Mammary epithelial cell (primary cell): ENCODE measurements at regions of chr17 and their contacts with region 1.

Region 1: DNA sequence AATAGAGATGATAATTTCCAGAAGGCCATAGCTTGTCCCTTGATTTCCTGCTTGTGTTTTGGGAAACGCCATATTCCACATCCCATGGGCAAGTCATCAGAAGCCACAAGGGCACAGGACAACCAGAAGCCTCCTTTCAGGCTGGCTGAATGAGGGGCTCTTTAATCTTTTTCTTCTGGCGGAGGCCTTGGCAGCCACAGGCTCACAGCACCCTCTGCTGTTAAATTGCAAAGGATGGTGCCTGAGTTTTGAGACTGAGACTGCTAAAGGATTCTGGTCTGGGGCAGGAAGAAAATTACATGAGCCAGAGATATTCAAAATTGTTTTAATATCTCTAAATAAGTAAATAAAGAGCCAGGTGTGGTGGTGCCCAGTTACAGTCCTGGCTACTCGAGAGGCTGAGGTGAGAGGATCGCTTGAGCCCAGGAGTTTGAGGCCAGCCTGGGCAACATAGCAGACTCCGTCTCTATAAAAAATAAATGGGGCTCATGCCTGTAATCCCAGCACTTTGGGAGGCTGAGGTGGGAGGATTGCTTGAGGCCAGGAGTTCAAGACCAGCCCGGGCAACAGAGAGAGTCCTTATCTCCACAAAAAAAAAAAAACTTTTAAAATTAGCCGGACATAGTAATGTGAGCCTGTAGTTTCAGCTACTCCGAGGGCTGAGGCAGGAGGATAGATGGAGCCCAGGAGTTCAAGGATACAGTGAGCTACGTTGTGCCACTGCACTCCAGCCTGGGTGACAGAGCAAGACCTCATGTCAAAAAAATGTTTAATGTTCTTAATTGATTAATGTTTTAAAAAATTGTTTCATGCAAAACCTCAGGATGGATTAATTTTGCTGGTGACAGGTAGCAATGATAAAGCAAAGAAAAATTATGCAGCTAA is 26.3 kb downstream of the AARSD1 start:
- DNase-seq: peak; percentile 25
- H3K4me3 ChIP-seq: no peak overlapping the region
- H3K27ac ChIP-seq: no peak overlapping the region
- H3K4me1 ChIP-seq: no peaks in the 10 kb centered on the region
- H3K27me3 ChIP-seq: no peaks in the 10 kb centered on the region
- CTCF ChIP-seq: peak; percentile 25 to 62

Region 2: GRCh38 chr17:42577532-42578281 is 360.2 kb before region 1 on chr17 and contains the start of gene PSMC3IP:
- CTCF ChIA-PET with region 1: no interaction called
- dilution Hi-C with region 1: no loop called
- in situ Hi-C with region 1: no loop called
- intact Hi-C with region 1: loop called (anchors 1 kb)
- DNase-seq: peak; percentile 94
- H3K4me3 ChIP-seq: peak within 1 kb of the TSS; percentile 67 to 78 (median 73)
- H3K27ac ChIP-seq: peak within 1 kb of the TSS; percentile 58
- H3K4me1 ChIP-seq: peaks cover 16% of the 10 kb centered on the region
- H3K27me3 ChIP-seq: no peaks in the 10 kb centered on the region
- CTCF ChIP-seq: peak; percentile 9 to 54
- total RNA-seq, gene PSMC3IP: 2.2 to 25.2 TPM

Region 3: DNA sequence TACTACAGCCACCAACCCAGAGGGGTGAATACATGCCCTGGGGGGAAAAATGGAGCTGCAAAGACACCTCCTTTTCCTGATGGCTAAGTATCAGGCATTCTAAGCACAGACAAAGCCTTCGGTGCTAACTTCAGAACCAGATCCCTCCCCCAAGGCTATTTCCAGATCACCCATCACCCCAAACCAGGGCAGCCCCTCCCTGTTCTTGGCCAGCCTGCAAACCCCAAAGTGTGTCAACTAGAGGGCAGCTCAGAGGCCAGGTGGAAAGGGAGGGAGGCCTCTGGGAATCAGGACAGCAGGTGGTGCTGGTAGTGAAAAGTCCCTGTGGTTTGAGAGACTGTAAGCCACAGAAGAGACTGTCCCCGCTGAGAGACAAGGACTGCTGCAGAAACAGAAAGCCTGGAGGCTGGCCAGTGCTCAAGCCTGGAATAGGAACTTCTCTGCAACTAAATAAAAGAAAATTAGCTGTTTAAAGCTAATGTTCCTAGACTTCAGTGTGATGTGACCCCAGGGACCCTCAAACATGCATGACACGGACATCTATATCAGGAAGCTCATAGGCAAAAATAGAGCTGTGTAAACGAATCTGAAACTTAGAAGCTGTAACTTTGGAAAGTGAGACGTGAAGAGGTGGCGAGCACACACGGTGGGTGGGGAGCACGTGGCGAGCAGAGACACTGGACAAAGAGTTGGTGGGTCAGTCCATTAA is 319.4 kb before region 1 on chr17:
- CTCF ChIA-PET with region 1: no interaction called
- dilution Hi-C with region 1: no loop called
- in situ Hi-C with region 1: no loop called
- intact Hi-C with region 1: loop called (anchors 1 kb)
- DNase-seq: peak; percentile 73
- H3K4me3 ChIP-seq: no peak overlapping the region
- H3K27ac ChIP-seq: no peak overlapping the region
- H3K4me1 ChIP-seq: peaks cover 15% of the 10 kb centered on the region
- H3K27me3 ChIP-seq: no peaks in the 10 kb centered on the region
- CTCF ChIP-seq: peak in 1 of 2 donors; percentile 65

Region 4: GRCh38 chr17:42720996-42721583 is 216.9 kb before region 1 on chr17:
- CTCF ChIA-PET with region 1: no interaction called
- dilution Hi-C with region 1: no loop called
- in situ Hi-C with region 1: no loop called
- intact Hi-C with region 1: loop called (anchors 2 kb)
- DNase-seq: peak; percentile 43
- H3K4me3 ChIP-seq: no peak overlapping the region
- H3K27ac ChIP-seq: no peak overlapping the region
- H3K4me1 ChIP-seq: no peaks in the 10 kb centered on the region
- H3K27me3 ChIP-seq: no peaks in the 10 kb centered on the region
- CTCF ChIP-seq: peak; percentile 59 to 65

Region 5: DNA sequence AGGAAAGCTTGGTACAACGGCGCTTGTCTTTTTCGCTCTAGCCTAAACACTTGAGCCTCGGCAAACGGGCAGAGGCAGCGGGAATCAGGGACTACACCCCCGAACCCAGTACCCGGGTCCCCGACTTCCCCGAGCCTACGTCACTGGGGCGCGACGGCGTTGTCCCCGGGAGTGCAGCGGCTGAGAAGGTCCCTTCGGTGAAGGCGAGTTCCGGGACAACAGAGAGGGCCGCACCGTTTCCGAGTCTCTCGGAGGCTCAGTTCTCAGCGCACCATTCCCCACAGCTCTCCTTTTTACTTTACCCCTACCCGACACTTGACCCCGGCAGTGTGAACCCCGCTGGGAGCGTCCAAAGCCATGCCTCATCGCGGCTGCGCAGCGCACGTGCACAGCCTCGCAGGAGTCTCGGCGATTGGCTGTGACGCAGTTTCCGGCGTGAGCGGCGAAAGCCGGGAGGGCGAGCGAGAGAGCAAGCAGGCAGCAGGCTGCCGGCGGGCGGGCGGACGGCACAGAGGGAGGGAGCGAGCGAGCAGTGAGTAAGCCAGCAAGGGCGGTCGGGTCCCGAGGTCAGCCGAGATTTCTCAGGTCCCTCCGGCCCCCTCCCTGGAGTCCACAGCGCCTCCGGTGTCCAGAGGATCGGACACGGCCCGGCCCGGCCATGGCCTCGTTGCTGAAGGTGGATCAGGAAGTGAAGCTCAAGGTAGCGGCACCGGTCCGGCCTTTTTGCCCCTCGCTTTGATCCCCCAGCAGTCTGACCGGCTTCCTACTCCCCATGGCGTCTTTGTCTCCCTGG is 104.8 kb before region 1 on chr17 and contains the start of gene PSME3:
- CTCF ChIA-PET with region 1: no interaction called
- dilution Hi-C with region 1: no loop called
- in situ Hi-C with region 1: no loop called
- intact Hi-C with region 1: no loop called
- DNase-seq: peak; percentile 90
- H3K4me3 ChIP-seq: peak within 1 kb of the TSS; percentile 66 to 81 (median 78)
- H3K27ac ChIP-seq: peak within 1 kb of the TSS; percentile 96
- H3K4me1 ChIP-seq: peaks cover 15% of the 10 kb centered on the region
- H3K27me3 ChIP-seq: no peaks in the 10 kb centered on the region
- CTCF ChIP-seq: no peak
- total RNA-seq, gene PSME3: 93.5 to 186 TPM

Region 6: DNA sequence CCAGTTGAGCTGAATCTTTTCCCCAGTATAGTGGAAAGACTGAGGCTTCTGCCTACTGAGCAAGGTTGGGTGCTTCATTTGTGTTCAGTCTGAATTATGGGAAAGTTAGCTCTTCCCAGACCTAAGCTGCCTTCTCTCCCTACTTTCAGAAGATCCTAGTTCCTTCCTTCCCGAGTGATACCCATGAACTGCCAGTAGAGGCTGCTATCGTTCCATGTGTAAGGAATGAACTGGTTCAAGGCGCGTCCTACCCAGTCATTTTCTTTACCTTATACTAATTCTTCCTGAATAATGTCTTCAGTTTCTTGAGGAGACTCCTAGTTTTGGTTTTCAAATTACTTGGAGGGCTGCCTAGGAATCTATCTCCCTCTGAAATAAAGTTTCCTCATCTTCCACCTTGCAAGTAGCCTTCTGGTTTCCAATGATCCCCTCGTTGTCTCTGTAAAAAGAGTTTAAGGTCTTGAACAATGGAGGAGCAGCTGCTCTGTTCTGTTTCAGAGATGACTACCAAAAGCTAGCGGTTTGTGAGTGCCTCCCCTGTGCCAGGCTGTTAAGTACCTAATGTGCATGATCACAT is 94.5 kb before region 1 on chr17:
- CTCF ChIA-PET with region 1: no interaction called
- dilution Hi-C with region 1: no loop called
- in situ Hi-C with region 1: no loop called
- intact Hi-C with region 1: loop called (anchors 1 kb)
- DNase-seq: peak; percentile 42
- H3K4me3 ChIP-seq: no peak overlapping the region
- H3K27ac ChIP-seq: no peak overlapping the region
- H3K4me1 ChIP-seq: peaks cover 6% of the 10 kb centered on the region
- H3K27me3 ChIP-seq: no peaks in the 10 kb centered on the region
- CTCF ChIP-seq: peak; percentile 98

Region 7: DNA sequence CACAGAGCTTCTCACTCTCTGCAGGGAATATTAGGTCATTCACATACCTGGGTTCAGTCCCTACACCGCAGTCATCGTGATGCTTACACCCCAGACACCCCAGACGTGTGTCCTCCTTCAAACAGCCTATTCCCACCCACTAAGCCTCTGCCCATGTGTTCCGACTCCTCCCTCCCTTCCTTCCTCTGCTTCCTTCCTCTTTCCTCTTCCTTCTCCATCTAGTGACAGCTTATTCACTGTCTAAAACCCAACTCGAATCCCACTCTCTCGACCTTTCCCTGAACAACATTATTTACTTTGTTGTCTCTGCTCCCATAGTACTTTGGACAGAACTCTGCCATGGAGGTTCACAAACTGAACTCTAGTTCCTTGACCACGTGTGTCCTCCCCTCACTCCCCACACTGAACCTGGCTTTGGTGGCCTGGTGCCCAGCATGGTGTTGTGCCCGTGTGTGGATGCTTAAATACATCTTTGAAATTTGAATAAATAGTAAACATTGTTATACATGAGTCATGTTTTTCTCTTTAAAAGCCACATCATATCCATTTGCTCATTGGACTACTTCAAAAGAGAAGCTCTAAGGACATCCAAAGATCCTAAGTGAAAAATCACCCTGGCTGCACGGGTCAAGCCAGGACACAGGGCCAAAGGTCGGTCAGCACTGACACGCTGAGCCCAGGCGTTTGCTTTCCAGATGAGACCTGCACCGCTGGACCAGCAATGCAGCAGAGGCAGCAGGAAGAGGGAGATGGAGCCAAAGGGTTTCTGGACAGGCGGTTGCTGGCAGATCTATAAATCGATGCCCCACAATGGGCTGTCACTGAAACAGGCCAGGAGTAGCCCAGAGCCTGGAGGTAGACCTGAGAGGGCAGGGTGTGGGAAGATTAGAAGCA is 51.4 kb before region 1 on chr17:
- CTCF ChIA-PET with region 1: interaction called, 10 read pairs
- dilution Hi-C with region 1: loop called (anchors 10 kb)
- in situ Hi-C with region 1: no loop called
- intact Hi-C with region 1: no loop called
- DNase-seq: no peak
- H3K4me3 ChIP-seq: no peak overlapping the region
- H3K27ac ChIP-seq: no peak overlapping the region
- H3K4me1 ChIP-seq: no peaks in the 10 kb centered on the region
- H3K27me3 ChIP-seq: no peaks in the 10 kb centered on the region
- CTCF ChIP-seq: no peak

Region 8: DNA sequence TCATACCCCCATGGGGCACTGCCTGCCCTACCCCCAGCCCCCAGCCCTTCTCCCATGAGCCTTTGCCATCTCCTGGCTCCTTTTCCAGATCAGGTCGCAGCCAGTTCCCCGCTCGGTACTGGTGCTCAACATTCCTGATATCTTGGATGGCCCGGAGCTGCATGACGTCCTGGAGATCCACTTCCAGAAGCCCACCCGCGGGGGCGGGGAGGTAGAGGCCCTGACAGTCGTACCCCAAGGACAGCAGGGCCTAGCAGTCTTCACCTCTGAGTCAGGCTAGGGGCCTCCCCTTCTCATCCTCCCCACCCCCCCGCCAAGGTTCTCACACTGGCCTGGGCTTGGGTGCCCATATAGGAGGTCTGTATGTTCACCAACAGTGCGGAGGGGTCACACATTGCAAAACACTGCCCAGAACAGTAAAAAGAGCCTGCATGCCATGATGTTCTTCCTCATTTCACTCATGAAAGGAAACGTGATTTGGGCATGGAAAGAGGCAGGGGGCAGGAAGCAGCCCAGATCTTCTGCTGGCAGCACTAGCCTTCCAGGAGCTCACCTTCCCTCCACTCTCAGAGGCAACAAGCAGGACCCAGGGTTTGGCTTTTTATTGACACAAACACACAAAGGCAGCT is 76.2 kb after region 1 on chr17:
- CTCF ChIA-PET with region 1: no interaction called
- dilution Hi-C with region 1: no loop called
- in situ Hi-C with region 1: no loop called
- intact Hi-C with region 1: no loop called
- DNase-seq: no peak
- H3K4me3 ChIP-seq: no peak overlapping the region
- H3K27ac ChIP-seq: no peak overlapping the region
- H3K4me1 ChIP-seq: peaks cover 7% of the 10 kb centered on the region
- H3K27me3 ChIP-seq: no peaks in the 10 kb centered on the region
- CTCF ChIP-seq: no peak

Region 9: DNA sequence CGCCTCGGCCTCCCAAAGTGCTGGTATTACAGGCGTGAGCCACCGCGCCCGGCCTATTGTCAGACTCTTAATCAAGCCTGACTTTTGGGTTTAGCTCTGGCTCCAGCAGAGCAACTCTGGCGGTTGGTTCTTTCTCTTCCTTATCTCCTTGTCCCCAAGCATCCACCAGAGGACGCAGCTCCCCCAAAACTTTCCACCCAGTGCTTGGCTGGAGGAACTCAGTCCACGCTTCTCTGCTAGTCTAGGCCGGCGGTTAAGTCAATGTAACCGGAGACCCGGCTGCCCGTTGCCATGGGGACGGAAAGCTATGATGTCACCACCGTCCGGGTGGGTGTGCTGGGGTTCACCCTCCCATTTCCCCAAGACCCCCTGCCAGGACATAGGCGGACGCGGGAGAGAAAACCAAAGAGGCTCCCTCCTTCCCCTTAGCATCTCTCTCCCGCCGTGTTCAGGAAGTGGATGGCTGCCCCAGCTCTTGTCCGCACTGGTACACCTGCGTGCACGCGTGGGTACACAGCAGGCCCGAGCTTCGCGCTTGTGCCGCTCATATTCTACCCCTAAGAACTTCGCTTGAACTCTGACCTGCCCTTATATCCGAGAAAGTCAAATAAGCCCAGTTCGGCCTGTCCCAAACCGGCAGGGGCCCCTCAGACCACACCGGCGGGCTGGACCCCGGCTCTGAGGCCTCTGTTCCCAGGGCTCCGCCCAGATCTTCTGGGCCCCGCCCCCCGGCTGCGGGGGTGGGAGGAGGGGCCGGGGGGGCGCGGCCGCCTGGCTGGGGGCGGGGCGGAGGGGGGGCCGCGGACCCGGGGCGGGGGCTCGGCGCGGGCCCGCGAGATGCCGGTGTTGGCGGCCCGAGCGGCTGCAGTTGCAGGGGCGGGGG is 86.7 kb after region 1 on chr17 and contains the start of gene RND2:
- CTCF ChIA-PET with region 1: interaction called, 21 read pairs
- dilution Hi-C with region 1: no loop called
- in situ Hi-C with region 1: no loop called
- intact Hi-C with region 1: no loop called
- DNase-seq: peak; percentile 84
- H3K4me3 ChIP-seq: peak within 1 kb of the TSS; percentile 50 to 60 (median 52)
- H3K27ac ChIP-seq: peak within 1 kb of the TSS; percentile 47
- H3K4me1 ChIP-seq: peaks cover 15% of the 10 kb centered on the region
- H3K27me3 ChIP-seq: no peaks in the 10 kb centered on the region
- CTCF ChIP-seq: peak; percentile 62 to 87
- total RNA-seq, gene RND2: 0.17 to 0.85 TPM